GM12878 (cell line): ENCODE measurements at regions of chr22 and their contacts with region 1.

Region 1: GRCh38 chr22:24525416-24526037 is 29.4 kb downstream of the GUCD1 start:
- DNase-seq: peak; percentile 62
- ATAC-seq: peak; percentile 92
- H3K4me3 ChIP-seq: no peak overlapping the region
- H3K27ac ChIP-seq: no peak overlapping the region
- H3K4me1 ChIP-seq: peaks cover 10% of the 10 kb centered on the region
- H3K27me3 ChIP-seq: no peaks in the 10 kb centered on the region
- CTCF ChIP-seq: peak; percentile 89 to 94 (median 90)
- EP300 ChIP-seq: no peak
- POLR2A ChIP-seq: no peak
- RAD21 ChIP-seq: peak; percentile 96

Region 2: GRCh38 chr22:24402460-24403192 is 122.9 kb before region 1 on chr22:
- CTCF ChIA-PET with region 1: interaction called, 13 read pairs
- POLR2A ChIA-PET with region 1: no interaction called
- RAD21 ChIA-PET with region 1: no interaction called
- SMC1A ChIA-PET with region 1: interaction called, 6 read pairs
- in situ Hi-C with region 1: no loop called
- intact Hi-C with region 1: no loop called
- DNase-seq: peak; percentile 33
- ATAC-seq: peak; percentile 67
- H3K4me3 ChIP-seq: no peak overlapping the region
- H3K27ac ChIP-seq: peak overlapping the region; percentile 85
- H3K4me1 ChIP-seq: peaks cover 44% of the 10 kb centered on the region
- H3K27me3 ChIP-seq: no peaks in the 10 kb centered on the region
- CTCF ChIP-seq: no peak
- EP300 ChIP-seq: peak; percentile 8 to 23; a peak in 2 of 4 replicates
- POLR2A ChIP-seq: no peak
- RAD21 ChIP-seq: no peak

Region 3: GRCh38 chr22:24486501-24486921 is 39.0 kb before region 1 on chr22:
- CTCF ChIA-PET with region 1: interaction called, 14 read pairs
- POLR2A ChIA-PET with region 1: no interaction called
- RAD21 ChIA-PET with region 1: interaction called, 6 read pairs
- SMC1A ChIA-PET with region 1: interaction called, 6 read pairs
- in situ Hi-C with region 1: no loop called
- intact Hi-C with region 1: no loop called
- DNase-seq: no peak
- ATAC-seq: peak; percentile 84
- H3K4me3 ChIP-seq: no peak overlapping the region
- H3K27ac ChIP-seq: no peak overlapping the region
- H3K4me1 ChIP-seq: no peaks in the 10 kb centered on the region
- H3K27me3 ChIP-seq: no peaks in the 10 kb centered on the region
- CTCF ChIP-seq: no peak
- EP300 ChIP-seq: no peak
- POLR2A ChIP-seq: no peak
- RAD21 ChIP-seq: no peak

Region 4: DNA sequence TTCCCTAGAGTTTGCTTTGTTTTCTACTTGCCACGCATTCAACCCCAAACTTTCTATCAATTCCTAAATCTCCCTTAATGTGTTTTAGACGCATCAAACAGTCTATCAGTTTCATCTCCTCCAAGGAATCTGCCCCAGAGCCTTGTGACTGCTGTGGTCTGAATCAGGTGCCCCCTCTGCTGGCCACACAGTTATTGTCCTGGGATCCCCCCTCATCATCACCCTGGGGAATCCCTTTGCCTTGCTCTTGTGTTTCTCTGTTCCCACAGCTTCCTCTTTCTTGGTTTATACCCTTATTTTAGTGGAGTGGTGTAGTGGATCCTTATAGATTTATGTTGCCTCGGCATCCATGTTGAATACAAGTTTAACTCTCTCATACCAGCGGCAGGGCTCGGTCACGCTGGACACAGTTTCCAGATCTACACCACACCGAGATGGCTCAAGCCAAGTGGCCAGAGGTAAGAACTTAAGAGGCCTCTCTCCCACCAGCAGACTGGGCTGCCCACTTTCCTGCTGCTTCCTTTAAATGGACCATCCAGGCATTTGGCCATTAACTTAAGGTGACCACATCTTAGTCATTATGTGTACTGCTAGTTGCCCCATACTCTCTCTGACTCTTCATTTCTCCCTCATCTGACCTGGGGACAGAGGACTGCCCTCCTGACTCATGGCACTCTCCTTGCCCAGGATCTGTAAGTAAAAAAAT is 22.2 kb before region 1 on chr22:
- CTCF ChIA-PET with region 1: interaction called, 213 read pairs
- POLR2A ChIA-PET with region 1: interaction called, 14 read pairs
- RAD21 ChIA-PET with region 1: interaction called, 64 read pairs
- SMC1A ChIA-PET with region 1: interaction called, 113 read pairs
- in situ Hi-C with region 1: no loop called
- intact Hi-C with region 1: no loop called
- DNase-seq: peak; percentile 85
- ATAC-seq: peak; percentile 68
- H3K4me3 ChIP-seq: peak overlapping the region; percentile 30; the same call in 1 of the 2 replicates
- H3K27ac ChIP-seq: peak overlapping the region; percentile 68
- H3K4me1 ChIP-seq: peaks cover 39% of the 10 kb centered on the region
- H3K27me3 ChIP-seq: no peaks in the 10 kb centered on the region; a peak in 1 of 4 replicates
- CTCF ChIP-seq: peak; percentile 76 to 90 (median 87)
- EP300 ChIP-seq: peak; percentile 47 to 57; a peak in 1 of 4 replicates
- POLR2A ChIP-seq: no peak
- RAD21 ChIP-seq: peak; percentile 84

Region 5: DNA sequence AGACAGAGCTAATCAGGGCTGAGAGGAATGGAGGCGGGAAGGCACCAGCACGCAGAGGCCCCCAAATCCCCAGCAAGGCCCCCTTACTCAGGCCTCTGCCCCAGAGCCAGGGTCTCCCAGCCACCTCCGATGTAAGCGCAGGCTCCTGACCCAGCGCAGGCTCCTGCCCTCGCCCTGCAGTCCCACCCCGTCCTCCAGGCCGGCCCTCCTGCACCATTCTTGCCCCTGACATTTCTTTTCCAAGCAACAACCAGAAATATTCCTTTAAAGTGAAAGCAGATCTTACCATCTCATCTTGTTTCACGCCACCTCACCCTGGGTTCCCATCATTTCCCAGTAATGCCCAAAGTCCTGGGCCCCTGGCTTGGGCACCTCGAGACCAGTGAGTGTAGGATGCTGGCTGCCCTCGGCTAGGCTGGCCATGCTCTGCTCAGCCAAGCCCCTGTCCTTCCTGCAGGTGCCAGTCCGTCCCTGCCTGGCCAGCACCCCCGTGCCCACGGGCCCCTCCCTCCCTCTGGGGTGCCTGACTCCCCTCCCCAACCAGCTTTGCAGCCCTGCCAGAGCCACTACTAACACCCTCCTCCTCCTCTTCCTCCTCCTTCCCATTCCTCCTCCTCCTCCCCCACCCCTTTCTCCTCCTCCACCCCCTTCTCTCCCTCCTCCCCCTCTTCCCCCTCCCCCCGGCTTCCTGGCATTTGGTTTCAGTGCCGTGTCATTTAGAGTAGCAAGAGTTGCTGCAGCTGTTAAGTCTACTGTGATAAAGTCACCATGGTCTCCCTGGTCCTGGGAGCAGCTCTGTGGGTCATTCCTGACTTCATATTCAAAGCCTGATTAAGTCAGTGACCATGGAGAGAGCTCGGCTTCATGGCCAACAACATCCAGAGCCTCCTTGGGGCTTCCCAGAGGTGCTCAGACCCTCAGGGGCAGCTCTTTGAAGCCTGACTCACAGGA is 170.3 kb after region 1 on chr22:
- CTCF ChIA-PET with region 1: no interaction called
- POLR2A ChIA-PET with region 1: no interaction called
- RAD21 ChIA-PET with region 1: no interaction called
- SMC1A ChIA-PET with region 1: no interaction called
- in situ Hi-C with region 1: no loop called
- intact Hi-C with region 1: no loop called
- DNase-seq: no peak
- ATAC-seq: no peak
- H3K4me3 ChIP-seq: no peak overlapping the region
- H3K27ac ChIP-seq: no peak overlapping the region
- H3K4me1 ChIP-seq: no peaks in the 10 kb centered on the region
- H3K27me3 ChIP-seq: no peaks in the 10 kb centered on the region
- CTCF ChIP-seq: no peak
- EP300 ChIP-seq: no peak
- POLR2A ChIP-seq: no peak
- RAD21 ChIP-seq: no peak

Region 6: GRCh38 chr22:24875862-24876506 is 350.5 kb after region 1 on chr22:
- CTCF ChIA-PET with region 1: no interaction called
- POLR2A ChIA-PET with region 1: no interaction called
- RAD21 ChIA-PET with region 1: no interaction called
- SMC1A ChIA-PET with region 1: no interaction called
- in situ Hi-C with region 1: no loop called
- intact Hi-C with region 1: no loop called
- DNase-seq: no peak
- ATAC-seq: no peak
- H3K4me3 ChIP-seq: no peak overlapping the region
- H3K27ac ChIP-seq: no peak overlapping the region
- H3K4me1 ChIP-seq: no peaks in the 10 kb centered on the region
- H3K27me3 ChIP-seq: no peaks in the 10 kb centered on the region
- CTCF ChIP-seq: no peak
- EP300 ChIP-seq: no peak
- POLR2A ChIP-seq: no peak
- RAD21 ChIP-seq: no peak

Region 7: GRCh38 chr22:24920029-24920428 is 394.5 kb after region 1 on chr22:
- CTCF ChIA-PET with region 1: no interaction called
- POLR2A ChIA-PET with region 1: no interaction called
- RAD21 ChIA-PET with region 1: no interaction called
- SMC1A ChIA-PET with region 1: no interaction called
- in situ Hi-C with region 1: no loop called
- intact Hi-C with region 1: no loop called
- DNase-seq: no peak
- ATAC-seq: no peak
- H3K4me3 ChIP-seq: no peak overlapping the region
- H3K27ac ChIP-seq: no peak overlapping the region
- H3K4me1 ChIP-seq: no peaks in the 10 kb centered on the region
- H3K27me3 ChIP-seq: no peaks in the 10 kb centered on the region
- CTCF ChIP-seq: no peak
- EP300 ChIP-seq: no peak
- POLR2A ChIP-seq: no peak
- RAD21 ChIP-seq: no peak